Breast epithelium (tissue), 4 donors: ENCODE measurements at regions of chr9 and their contacts with region 1.

Region 1: DNA sequence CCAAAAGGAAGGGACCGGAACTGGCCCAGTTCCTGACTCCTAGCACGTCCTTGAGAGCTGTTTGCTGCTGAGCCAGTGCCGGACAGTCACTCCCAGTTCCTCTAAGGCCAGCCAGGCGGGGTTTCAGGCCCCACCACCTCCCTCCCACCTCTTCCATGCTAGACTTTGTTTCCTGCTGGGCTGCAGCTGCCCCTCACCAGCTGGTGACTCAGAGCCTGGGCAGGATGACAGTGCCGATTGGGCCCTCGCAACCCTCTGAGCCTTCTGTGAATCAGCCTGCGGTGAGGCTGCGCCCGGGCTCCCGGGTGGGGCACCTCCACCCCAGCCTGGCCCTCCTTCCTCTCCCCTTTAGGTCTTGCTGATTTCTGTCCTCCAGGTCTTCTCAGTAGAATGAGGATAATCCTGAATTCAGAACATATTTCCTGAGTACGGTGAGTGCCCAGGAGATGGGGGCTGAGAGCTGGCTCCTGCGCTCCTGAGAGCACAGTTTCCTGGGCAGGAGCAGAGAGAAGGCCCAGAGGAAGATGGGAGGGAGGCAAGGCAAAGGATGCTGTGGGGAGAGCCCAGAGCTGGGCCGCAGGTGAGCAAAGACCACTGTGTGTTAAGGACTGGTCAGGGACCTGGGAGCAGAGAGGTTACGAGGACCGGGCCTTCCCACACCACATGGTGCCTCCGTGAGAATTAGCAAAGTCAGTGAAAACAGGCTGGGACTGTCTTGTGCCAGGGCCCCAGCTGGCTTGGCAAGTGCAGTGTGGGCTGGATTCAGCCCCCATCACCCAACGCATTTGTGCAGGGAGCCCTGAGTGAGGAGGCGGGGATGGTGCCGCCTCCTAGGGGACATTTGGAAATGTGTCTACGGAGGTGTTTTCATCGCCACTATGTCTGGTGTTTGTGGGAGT is 32.9 kb upstream of the STXBP1 start:
- DNase-seq: peak; percentile 89 to 91
- H3K4me3 ChIP-seq: peak overlapping the region; percentile 10 to 39 (median 24)
- H3K27ac ChIP-seq: peak overlapping the region; percentile 88 to 96
- H3K4me1 ChIP-seq: peaks cover 0 to 30% of the 10 kb centered on the region in 2 donors
- H3K27me3 ChIP-seq: no peaks in the 10 kb centered on the region
- CTCF ChIP-seq: peak in 2 of 3 donors; percentile 20 to 56
- POLR2A ChIP-seq: no peak

Region 2: GRCh38 chr9:128094166-128094967 is 515.2 kb after region 1 on chr9:
- intact Hi-C with region 1: no loop called
- DNase-seq: peak; percentile 94 to 97
- H3K4me3 ChIP-seq: peak overlapping the region in 2 of 3 donors; percentile 33 to 52
- H3K27ac ChIP-seq: peak overlapping the region; percentile 97 to 98
- H3K4me1 ChIP-seq: peaks cover 27 to 45% of the 10 kb centered on the region in 2 donors
- H3K27me3 ChIP-seq: no peaks in the 10 kb centered on the region
- CTCF ChIP-seq: no peak
- POLR2A ChIP-seq: no peak

Region 3: DNA sequence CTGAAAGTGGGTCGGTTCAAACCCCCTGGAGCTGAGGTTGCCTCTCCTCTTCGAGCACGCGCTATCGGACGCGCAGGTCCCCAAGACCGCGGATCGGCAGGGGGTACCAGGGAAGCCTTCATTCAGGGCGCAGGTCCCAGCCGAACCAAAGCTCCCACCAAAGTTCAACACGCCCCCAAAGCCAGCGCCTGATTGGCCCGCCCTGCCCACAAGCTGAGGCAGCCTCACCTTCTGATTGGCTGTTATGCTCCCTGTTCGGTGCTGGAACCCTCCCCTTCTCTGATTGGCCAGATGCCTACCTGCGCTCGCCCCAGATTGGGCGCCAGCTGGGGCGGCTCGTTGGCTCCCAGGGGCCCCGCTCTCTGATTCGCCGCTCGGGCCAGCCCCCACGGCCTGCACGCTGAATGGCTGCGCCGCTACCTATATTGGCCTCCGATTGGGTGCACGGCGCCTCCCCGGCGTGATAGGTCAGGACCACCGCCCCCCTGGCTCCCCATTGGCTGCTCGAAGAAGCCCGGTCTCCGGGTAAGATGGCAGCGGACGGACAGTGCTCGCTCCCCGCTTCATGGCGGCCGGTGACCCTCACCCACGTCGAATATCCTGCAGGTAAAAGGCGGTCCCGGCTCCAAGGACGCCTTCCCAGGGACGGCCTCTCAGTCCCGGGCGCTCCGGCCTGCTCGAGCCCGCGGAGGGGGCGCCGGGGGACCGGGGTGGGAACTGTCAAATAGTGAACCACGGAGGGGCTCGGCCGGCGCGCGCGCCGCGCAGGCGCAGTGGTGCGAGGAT is 1501.6 kb after region 1 on chr9 and contains the start of gene DOLPP1:
- intact Hi-C with region 1: loop called (anchors 10 kb)
- DNase-seq: peak; percentile 100
- H3K4me3 ChIP-seq: peak within 1 kb of the TSS; percentile 77 to 81 (median 81)
- H3K27ac ChIP-seq: peak within 1 kb of the TSS; percentile 57 to 74
- H3K4me1 ChIP-seq: peaks cover 0 to 10% of the 10 kb centered on the region in 2 donors
- H3K27me3 ChIP-seq: no peaks in the 10 kb centered on the region
- CTCF ChIP-seq: peak in 2 of 3 donors; percentile 29 to 43
- POLR2A ChIP-seq: peak; percentile 63
- total RNA-seq, gene DOLPP1: 5.6 to 9.2 (median 8.6) TPM